ENCODE measurements at regions of chr19 and their contacts with region 1.

Region 1: DNA sequence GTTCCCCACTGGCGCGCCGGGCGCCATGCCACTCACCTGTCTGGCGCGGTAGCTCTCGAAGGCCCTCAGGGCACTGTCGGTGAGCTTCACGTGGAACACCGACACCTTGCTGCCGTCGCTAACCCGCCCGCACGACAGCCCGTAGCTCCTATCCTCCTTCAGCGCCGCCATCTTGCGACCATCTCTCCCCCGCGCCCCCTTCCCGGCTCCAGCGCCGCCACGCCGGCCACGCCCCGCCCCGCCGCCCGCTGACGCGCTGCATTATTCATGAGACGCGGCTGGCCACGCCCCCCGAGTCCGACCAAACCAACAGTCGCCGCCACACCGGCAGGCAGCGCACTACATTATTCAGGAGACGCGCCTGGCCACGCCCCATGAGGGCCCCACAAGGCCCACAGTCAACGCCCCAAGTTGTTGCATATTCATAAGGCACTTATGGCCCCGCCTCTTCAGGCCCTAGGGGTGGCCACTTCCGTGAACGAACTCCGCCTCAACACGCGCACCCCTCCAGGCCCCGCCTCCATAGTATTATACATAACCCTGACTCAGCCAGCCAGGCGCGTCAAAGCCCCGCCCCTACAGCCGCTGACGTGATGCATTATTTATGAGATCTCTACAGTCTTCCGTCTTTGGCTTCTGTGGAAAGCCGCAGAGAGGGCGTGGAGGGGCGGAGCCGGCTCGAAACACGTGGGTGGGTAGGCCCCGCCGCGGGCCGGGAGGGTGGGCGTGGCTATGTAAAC is at the start of gene ELL:
- DNase-seq: peak; percentile 100
- H3K4me3 Mint-ChIP-seq: peak within 1 kb of the TSS; percentile 98
- H3K27ac Mint-ChIP-seq: peak within 1 kb of the TSS; percentile 89
- H3K4me1 Mint-ChIP-seq: peaks cover 26% of the 10 kb centered on the region
- H3K27me3 Mint-ChIP-seq: no peaks in the 10 kb centered on the region

Region 2: GRCh38 chr19:18450931-18451845 is 70.9 kb before region 1 on chr19:
- CTCF ChIA-PET with region 1: interaction called, 11 read pairs
- DNase-seq: peak; percentile 92
- H3K4me3 Mint-ChIP-seq: no peak overlapping the region
- H3K27ac Mint-ChIP-seq: no peak overlapping the region
- H3K4me1 Mint-ChIP-seq: no peaks in the 10 kb centered on the region
- H3K27me3 Mint-ChIP-seq: no peaks in the 10 kb centered on the region

Region 3: DNA sequence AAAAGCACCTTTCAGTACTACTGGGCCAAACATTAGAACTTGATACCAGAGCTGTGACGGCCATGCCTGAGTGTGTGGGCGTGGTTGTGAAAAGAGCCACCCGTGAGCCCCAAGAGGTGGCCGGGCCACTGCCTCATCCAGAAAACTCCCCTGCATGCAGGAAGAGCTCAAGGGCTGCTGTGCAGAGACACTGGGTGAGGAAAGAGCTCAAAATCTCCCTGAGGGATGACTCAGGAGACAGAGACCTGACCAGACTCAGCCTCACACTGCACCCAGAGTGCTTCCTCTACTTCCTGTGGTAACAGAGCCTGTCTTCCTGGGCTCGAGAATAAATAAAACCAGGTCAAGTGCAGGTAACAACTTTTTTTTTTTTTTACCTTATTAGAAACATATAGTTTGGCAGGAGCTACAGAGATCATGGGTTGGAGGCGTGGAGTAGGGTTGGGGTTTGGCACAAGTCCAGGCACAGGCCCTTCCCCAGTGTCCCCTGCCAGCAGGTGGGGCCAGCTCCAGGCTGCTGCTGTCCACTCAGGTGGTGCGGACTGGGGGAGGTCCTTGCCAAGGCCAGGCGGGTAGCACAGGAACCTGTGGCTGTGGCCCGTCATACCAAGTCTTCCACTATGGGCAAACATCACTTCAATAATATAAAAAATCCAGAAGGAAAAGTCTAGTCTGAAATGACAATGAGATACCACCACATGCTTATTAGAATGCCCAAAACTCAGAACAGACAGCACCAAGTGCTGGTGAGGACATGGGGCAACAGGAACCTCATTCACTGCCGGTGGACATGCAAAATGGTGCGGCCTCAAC is 25.7 kb before region 1 on chr19:
- CTCF ChIA-PET with region 1: interaction called, 20 read pairs
- DNase-seq: peak; percentile 63
- H3K4me3 Mint-ChIP-seq: peak overlapping the region; percentile 23
- H3K27ac Mint-ChIP-seq: peak overlapping the region; percentile 82
- H3K4me1 Mint-ChIP-seq: peaks cover 70% of the 10 kb centered on the region
- H3K27me3 Mint-ChIP-seq: no peaks in the 10 kb centered on the region

Region 4: GRCh38 chr19:18542936-18543815 is 21.1 kb after region 1 on chr19 and contains the start of gene FKBP8:
- CTCF ChIA-PET with region 1: interaction called, 13 read pairs
- DNase-seq: peak; percentile 98
- H3K4me3 Mint-ChIP-seq: peak within 1 kb of the TSS; percentile 96
- H3K27ac Mint-ChIP-seq: peak within 1 kb of the TSS; percentile 99
- H3K4me1 Mint-ChIP-seq: peaks cover 34% of the 10 kb centered on the region
- H3K27me3 Mint-ChIP-seq: peaks cover 18% of the 10 kb centered on the region

Region 5: DNA sequence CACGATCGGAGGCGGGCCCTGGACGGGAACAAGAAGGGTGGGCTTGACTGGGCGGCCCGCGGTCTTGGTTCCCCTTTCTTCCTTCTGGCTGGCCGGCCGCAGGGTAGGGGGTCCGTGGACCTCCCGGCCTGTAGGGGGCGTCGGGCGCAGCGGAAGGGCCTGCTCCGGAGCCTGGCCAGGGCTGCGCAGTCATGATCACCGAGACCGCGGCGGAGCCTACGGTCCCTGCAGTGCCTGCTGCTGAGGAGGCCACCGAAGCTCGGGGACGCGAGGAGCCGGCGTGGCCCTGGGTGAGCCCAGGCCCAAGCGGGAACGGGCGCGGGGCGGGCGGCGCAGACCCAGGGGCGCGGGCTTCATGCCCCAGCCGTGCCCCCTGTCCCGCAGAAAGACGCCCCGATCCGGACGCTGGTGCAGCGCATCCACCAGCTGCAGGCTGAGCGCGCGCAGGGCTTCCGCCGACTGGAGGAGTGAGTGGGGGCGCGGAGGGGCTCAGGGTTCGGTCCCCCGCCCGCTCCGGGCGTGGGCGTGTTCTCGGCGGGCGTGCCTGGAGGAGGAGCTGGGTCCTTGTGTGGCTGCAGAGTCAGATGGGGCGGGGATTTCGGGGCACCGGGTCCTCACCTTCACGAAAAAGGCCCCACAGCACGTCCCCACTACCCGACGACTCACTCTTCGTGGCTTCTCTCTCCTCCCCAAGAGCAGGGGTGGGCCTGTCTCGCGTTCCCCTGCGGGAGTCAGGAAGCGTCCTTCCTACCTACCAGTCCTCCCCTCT is 66.7 kb after region 1 on chr19 and contains the start of gene REX1BD:
- CTCF ChIA-PET with region 1: interaction called, 32 read pairs
- DNase-seq: peak; percentile 92
- H3K4me3 Mint-ChIP-seq: peak within 1 kb of the TSS; percentile 77
- H3K27ac Mint-ChIP-seq: peak within 1 kb of the TSS; percentile 97
- H3K4me1 Mint-ChIP-seq: peaks cover 53% of the 10 kb centered on the region
- H3K27me3 Mint-ChIP-seq: peaks cover 9% of the 10 kb centered on the region

Region 6: GRCh38 chr19:18846862-18847548 is 324.9 kb after region 1 on chr19:
- CTCF ChIA-PET with region 1: interaction called, 10 read pairs
- DNase-seq: peak; percentile 79
- H3K4me3 Mint-ChIP-seq: no peak overlapping the region
- H3K27ac Mint-ChIP-seq: peak overlapping the region; percentile 68
- H3K4me1 Mint-ChIP-seq: peaks cover 55% of the 10 kb centered on the region
- H3K27me3 Mint-ChIP-seq: no peaks in the 10 kb centered on the region

Measured in activated naive CD4-positive, alpha-beta T cell treated with anti-CD3 and anti-CD28 coated beads, Interleukin-2, amount 10 ng/mL, durations not matched to agents 7 days and 5 days (primary cell).